ENCODE measurements at regions of chr1 and their contacts with region 1.

Region 1: DNA sequence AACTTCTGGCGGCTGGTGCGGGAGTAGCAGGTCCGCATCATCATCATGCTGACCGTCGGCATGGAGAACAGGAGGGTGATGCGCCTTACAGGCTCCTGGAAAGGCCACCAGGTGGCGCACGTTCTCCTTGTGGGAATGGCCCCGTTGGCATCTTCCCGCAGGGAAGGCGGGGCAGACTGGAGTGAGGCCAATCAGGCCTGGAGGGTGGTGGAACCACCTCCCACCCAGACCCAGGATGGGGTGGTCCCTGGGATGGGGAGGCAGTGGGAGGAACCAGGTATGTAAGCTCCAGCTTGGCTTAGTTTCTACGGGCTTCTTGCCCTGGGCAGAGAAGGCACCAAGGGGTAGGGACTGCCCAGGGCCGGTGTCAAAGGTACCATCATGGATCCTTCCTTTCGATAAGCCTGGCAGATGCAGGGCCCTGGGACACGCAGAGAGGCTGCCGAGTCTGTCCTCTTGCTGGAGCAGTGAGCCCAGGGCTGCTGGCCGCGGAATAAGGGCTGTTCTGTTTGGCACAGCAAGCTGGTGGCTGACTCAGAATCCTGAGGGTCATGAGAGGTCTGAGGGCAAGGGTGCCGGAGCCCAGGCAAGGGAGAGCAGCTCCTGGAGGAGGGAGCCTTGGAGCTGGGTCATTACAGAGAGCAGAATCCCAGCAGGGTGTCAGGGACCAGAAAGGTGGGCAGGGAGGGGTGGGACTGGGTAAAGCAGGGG is 8.7 kb upstream of the LGR6 start:
- DNase-seq: peak; percentile 82 to 91 (median 86)
- ATAC-seq: peak; percentile 83
- H3K4me3 ChIP-seq: no peak overlapping the region
- H3K4me1 ChIP-seq: peaks cover 5% of the 10 kb centered on the region
- CTCF ChIP-seq: peak; percentile 80

Region 2: GRCh38 chr1:202315576-202316168 is 130.8 kb after region 1 on chr1:
- intact Hi-C with region 1: loop called (anchors 5 to 10 kb)
- DNase-seq: peak; percentile 67 to 92 (median 89)
- ATAC-seq: peak; percentile 95
- H3K4me3 ChIP-seq: no peak overlapping the region
- H3K4me1 ChIP-seq: no peaks in the 10 kb centered on the region
- CTCF ChIP-seq: peak; percentile 86

Region 3: GRCh38 chr1:202710070-202711045 is 525.5 kb after region 1 on chr1 and contains the start of gene SYT2:
- intact Hi-C with region 1: loop called in 1 of 2 experiments (anchors 10 kb)
- DNase-seq: peak in 2 of 3 donors; percentile 12 to 47
- ATAC-seq: peak; percentile 50
- H3K4me3 ChIP-seq: no peak within 1 kb of the TSS
- H3K4me1 ChIP-seq: peaks cover 12% of the 10 kb centered on the region
- CTCF ChIP-seq: no peak
- total RNA-seq, gene SYT2: 0.16 to 0.43 TPM in 2 of 3 donors, not detected in the other